ENCODE measurements at regions of chr12 and their contacts with region 1.

Region 1: DNA sequence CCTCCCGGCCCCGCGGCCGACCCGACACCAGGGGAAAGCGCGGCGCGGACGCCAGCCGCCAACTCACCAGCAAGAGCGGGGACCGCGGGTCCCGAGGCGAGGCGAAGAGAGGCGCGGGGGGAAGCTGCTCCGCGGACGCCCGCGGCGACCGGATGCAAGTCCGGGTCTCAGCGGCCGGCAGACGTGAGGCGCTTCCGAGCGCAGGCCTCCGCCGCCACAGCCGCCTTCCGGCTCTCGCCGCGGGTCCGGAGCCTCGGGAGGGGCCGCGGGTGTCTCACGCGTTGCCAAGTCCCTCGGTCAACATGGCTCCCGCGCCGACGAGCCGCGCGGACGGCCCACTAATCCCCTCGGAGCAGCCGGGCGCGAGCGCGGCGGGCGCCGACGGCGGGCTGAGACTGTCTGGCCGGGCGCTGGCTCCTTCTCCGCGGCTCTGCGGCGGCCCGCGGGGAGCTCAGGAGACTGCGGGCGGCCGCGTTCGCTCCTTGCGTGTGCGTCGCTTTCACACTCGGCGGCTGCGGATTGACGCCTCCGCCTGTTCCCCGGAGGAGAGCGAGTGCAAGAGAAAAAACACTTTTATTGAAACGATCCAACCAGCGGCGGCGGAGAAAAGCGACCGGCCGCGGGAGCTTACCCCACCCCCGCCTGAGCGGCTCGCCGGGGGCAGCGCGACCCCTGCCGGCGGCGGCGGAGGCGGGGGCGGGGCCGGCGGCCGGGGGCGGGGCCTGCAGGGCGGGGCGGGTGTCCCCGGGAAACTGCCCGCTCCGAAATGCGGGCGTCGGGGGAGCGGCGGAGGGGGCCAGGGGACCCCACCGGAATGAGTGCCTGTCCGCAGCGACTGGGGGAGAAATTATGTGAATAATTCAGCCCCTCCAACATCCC is at the start of gene CDK17:
- DNase-seq: peak; percentile 77
- ATAC-seq: peak; percentile 65
- H3K4me3 ChIP-seq: peak within 1 kb of the TSS; percentile 82
- H3K27ac ChIP-seq: peak within 1 kb of the TSS; percentile 90
- H3K4me1 ChIP-seq: peaks cover 27% of the 10 kb centered on the region
- H3K27me3 ChIP-seq: no peaks in the 10 kb centered on the region
- CTCF ChIP-seq: 0 out of 2 replicates have a peak, but pooled peaks have one; percentile 16
- total RNA-seq, gene CDK17: 20.7 and 23.9 TPM in 2 replicates

Region 2: GRCh38 chr12:96061864-96062453 is 338.2 kb before region 1 on chr12:
- CTCF ChIA-PET with region 1: interaction called, 10 read pairs
- POLR2A ChIA-PET with region 1: no interaction called
- intact Hi-C with region 1: loop called (anchors 1 kb)
- DNase-seq: peak; percentile 89
- ATAC-seq: peak; percentile 92
- H3K4me3 ChIP-seq: no peak overlapping the region
- H3K27ac ChIP-seq: no peak overlapping the region
- H3K4me1 ChIP-seq: no peaks in the 10 kb centered on the region
- H3K27me3 ChIP-seq: no peaks in the 10 kb centered on the region
- CTCF ChIP-seq: peak; percentile 91

Region 3: DNA sequence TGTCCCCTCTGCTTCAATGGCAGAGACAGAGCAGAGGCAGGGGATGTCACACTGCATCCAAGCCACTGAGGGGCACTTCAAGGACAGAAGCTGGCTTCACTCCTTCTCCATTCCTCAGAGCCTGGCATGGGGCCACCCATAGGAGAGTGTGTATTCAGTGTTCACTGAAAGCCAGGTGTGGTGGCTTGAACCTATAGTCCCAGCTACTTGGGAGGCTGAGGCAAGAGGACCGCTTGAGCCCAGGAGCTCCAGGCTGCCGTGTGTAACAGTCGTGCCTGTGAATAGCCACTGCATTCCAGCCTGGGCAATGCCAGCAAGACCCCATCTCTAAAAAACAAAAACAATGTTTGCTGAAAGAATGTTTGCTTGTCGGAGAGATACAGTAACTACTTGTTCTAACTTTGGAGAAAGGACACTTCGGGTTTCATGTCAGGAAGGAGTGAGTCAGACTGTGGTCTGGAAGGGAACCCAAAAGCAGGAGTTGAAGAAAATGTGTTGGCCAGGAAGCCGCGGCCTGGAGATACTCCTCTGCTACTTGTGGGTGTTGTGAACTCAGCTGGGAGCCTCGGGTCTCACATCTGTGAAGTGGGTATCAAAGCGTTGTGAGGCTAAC is 162.6 kb before region 1 on chr12:
- CTCF ChIA-PET with region 1: no interaction called
- POLR2A ChIA-PET with region 1: no interaction called
- intact Hi-C with region 1: loop called (anchors 2 kb)
- DNase-seq: peak; percentile 93
- ATAC-seq: peak; percentile 94
- H3K4me3 ChIP-seq: peak overlapping the region; percentile 31; the same call in 1 of the 2 replicates
- H3K27ac ChIP-seq: peak overlapping the region; percentile 80
- H3K4me1 ChIP-seq: peaks cover 21% of the 10 kb centered on the region
- H3K27me3 ChIP-seq: no peaks in the 10 kb centered on the region
- CTCF ChIP-seq: no peak

Region 4: GRCh38 chr12:96334502-96334901 is 65.7 kb before region 1 on chr12:
- CTCF ChIA-PET with region 1: no interaction called
- POLR2A ChIA-PET with region 1: no interaction called
- intact Hi-C with region 1: loop called (anchors 1 kb)
- DNase-seq: peak; percentile 25
- ATAC-seq: peak; percentile 83
- H3K4me3 ChIP-seq: no peak overlapping the region
- H3K27ac ChIP-seq: no peak overlapping the region
- H3K4me1 ChIP-seq: peaks cover 6% of the 10 kb centered on the region; the same call in 1 of the 2 replicates
- H3K27me3 ChIP-seq: no peaks in the 10 kb centered on the region
- CTCF ChIP-seq: no peak

Region 5: GRCh38 chr12:96416033-96416801 is 16.1 kb after region 1 on chr12:
- CTCF ChIA-PET with region 1: no interaction called
- POLR2A ChIA-PET with region 1: no interaction called
- intact Hi-C with region 1: no loop called
- DNase-seq: peak; percentile 96
- ATAC-seq: peak; percentile 84
- H3K4me3 ChIP-seq: peak overlapping the region; percentile 21; the same call in 1 of the 2 replicates
- H3K27ac ChIP-seq: peak overlapping the region; percentile 86
- H3K4me1 ChIP-seq: peaks cover 22% of the 10 kb centered on the region
- H3K27me3 ChIP-seq: no peaks in the 10 kb centered on the region
- CTCF ChIP-seq: no peak

Region 6: GRCh38 chr12:96427269-96427729 is 27.1 kb after region 1 on chr12:
- CTCF ChIA-PET with region 1: interaction called, 7 read pairs
- POLR2A ChIA-PET with region 1: no interaction called
- intact Hi-C with region 1: loop called (anchors 1 kb)
- DNase-seq: peak; percentile 97
- ATAC-seq: peak; percentile 86
- H3K4me3 ChIP-seq: peak overlapping the region; percentile 40
- H3K27ac ChIP-seq: peak overlapping the region; percentile 91
- H3K4me1 ChIP-seq: peaks cover 38% of the 10 kb centered on the region
- H3K27me3 ChIP-seq: no peaks in the 10 kb centered on the region
- CTCF ChIP-seq: no peak

Region 7: DNA sequence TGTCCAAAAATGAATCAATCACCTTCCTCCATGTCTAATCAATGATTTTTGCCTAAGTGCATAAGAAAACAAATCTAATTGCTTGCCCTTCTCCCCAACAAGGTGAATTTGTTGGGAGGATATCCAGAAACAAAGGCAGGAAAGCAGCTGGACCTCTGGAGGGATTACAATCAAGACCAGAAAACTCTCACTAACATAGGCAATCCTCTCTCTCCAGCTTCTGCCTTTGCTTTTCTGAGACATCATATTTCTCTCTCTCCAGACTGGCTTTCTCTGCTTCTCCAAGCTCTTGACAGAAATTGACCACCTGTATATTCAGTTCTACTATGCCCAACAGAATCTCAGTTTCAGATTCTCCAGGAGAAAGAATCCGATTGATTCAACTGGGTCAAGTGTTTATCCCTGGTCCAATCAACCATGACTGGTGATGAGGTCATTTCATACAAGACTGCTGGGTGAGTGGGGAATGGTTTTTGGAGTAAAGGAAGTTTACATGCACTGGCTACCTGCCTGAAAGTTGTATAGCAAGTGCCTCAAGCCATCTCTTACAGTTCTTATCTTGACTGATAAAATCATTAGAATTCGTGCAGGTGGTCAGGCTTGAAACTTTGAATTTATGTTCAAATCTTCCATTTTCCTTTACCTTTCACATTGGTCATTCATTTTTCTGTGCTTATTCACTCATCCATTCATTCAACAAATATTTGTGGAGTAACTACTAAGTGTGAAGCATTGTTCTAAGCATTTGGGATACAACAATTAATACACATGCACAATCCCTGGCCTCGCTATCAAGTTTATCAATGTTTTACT is 67.0 kb after region 1 on chr12:
- CTCF ChIA-PET with region 1: no interaction called
- POLR2A ChIA-PET with region 1: no interaction called
- intact Hi-C with region 1: loop called (anchors 2 kb)
- DNase-seq: peak; percentile 92
- ATAC-seq: peak; percentile 83
- H3K4me3 ChIP-seq: 0 out of 2 replicates have a peak overlapping the region, but pooled peaks have one; percentile 11
- H3K27ac ChIP-seq: peak overlapping the region; percentile 72
- H3K4me1 ChIP-seq: peaks cover 32% of the 10 kb centered on the region
- H3K27me3 ChIP-seq: no peaks in the 10 kb centered on the region
- CTCF ChIP-seq: no peak

Region 8: GRCh38 chr12:96501139-96501761 is 101.1 kb after region 1 on chr12:
- CTCF ChIA-PET with region 1: interaction called, 3 read pairs
- POLR2A ChIA-PET with region 1: no interaction called
- intact Hi-C with region 1: loop called (anchors 1 kb)
- DNase-seq: peak; percentile 85
- ATAC-seq: peak; percentile 99
- H3K4me3 ChIP-seq: peak overlapping the region; percentile 14; the same call in 1 of the 2 replicates
- H3K27ac ChIP-seq: peak overlapping the region; percentile 84
- H3K4me1 ChIP-seq: peaks cover 27% of the 10 kb centered on the region
- H3K27me3 ChIP-seq: no peaks in the 10 kb centered on the region
- CTCF ChIP-seq: no peak